H1 (cell line): ENCODE measurements at regions of chr16 and their contacts with region 1.

Region 1: DNA sequence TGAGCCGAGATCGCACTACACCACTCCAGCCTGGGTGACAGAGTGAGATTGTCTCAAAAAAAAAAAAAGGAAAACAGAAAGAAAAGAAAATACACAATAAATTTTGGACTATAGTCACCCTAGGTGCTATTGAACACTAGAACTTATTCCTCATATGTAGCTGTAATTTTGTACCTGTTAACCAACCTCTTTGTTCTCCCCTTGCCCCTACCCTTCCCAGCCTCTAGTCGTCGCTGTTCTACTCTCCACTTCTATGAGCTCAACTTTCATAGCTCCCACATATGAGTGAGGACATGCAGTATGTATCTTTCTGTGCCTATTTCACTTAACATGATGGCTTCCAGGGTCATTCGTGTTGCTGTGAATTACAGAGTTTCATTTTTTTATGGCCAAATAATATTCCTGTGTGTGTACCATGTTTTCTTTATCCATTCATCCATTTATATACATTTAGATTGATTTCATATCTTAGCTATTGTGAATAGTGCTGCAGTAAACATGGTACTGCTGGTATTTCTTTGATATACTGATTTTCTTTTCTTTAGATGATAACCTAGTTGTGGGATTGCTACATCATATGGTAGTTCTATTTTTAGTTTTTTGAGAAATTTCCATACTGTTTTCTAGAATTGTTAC is 28.3 kb downstream of the VPS35L start:
- DNase-seq: no peak
- H3K4me3 ChIP-seq: no peak overlapping the region
- H3K27ac ChIP-seq: no peak overlapping the region
- H3K4me1 ChIP-seq: no peaks in the 10 kb centered on the region
- H3K27me3 ChIP-seq: no peaks in the 10 kb centered on the region
- CTCF ChIP-seq: peak; percentile 27 to 87 (median 53)
- EP300 ChIP-seq: no peak
- POLR2A ChIP-seq: no peak
- RAD21 ChIP-seq: peak; percentile 51 to 64; a peak in 3 of 4 replicates

Region 2: DNA sequence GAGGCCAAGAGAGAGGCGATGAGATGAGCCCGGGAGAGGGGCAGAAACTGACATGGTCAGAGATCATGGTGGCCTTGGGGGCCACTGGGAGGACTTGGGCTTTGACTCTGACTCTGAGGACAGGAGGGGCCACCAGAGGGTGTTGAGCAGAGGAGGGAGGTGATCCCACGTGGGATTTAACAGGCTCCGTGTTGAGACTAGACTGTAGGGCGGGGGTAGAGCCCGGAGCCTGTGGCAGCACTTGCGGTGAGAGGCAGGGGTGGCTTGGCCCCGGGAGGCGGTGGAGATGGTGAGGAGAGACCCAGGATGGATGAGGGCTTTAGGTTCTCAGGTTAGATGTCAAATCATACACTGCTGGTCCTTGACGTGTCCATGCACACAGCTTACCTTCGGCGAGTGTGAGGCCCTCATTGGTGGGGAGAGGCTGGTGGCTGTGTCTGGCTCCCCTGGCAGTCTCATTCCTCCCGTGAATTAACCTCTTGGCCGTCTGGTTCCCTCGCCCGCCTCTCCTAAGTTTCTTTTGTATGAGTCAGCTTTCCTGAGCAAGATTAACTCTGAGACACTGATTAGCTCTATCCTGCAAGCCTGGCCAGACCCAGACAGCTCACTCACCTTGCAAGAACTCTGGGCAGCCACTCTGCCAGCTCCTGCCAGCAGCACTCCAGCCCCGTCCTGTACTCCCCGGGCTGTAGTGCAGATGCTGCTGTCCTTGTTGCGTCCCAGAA is 11.4 kb after region 1 on chr16:
- CTCF ChIA-PET with region 1: interaction called, 91 read pairs
- POLR2A ChIA-PET with region 1: no interaction called
- DNase-seq: no peak
- H3K4me3 ChIP-seq: no peak overlapping the region
- H3K27ac ChIP-seq: 0 out of 2 replicates have a peak overlapping the region, but pooled peaks have one; percentile 15
- H3K4me1 ChIP-seq: peaks cover 0 to 6% (median 1%) of the 10 kb centered on the region in 4 experiments; a peak in 3 of 7 replicates
- H3K27me3 ChIP-seq: no peaks in the 10 kb centered on the region
- CTCF ChIP-seq: no peak
- EP300 ChIP-seq: no peak
- POLR2A ChIP-seq: no peak
- RAD21 ChIP-seq: no peak

Region 3: GRCh38 chr16:19601083-19601976 is 17.5 kb after region 1 on chr16:
- CTCF ChIA-PET with region 1: interaction called, 91 read pairs
- POLR2A ChIA-PET with region 1: no interaction called
- DNase-seq: peak in 1 of 2 experiments; percentile 56
- H3K4me3 ChIP-seq: no peak overlapping the region
- H3K27ac ChIP-seq: no peak overlapping the region
- H3K4me1 ChIP-seq: peaks cover 0 to 4% (median 2%) of the 10 kb centered on the region in 4 experiments; a peak in 3 of 7 replicates
- H3K27me3 ChIP-seq: no peaks in the 10 kb centered on the region
- CTCF ChIP-seq: peak in 2 of 3 experiments; percentile 51; a peak in 3 of 4 replicates
- EP300 ChIP-seq: no peak
- POLR2A ChIP-seq: no peak
- RAD21 ChIP-seq: peak; percentile 79 to 87

Region 4: DNA sequence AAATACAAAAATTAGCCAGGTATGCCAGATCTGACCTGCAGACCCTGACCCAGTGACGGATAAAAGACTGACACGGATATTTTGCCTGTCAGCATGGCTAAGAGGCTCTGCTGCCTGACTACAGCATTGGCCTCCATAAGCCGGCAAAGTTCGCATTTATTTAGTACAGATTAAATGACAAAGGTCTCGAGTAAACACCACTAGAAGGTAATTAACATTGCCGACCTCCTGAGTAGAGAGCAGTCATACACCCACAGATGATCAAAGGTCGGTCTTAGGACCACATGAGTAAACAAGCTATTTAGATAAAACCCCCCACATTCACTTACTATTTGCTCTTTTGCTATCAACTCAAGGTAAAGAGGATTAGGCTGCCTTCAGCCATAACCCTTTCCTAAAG is 78.6 kb after region 1 on chr16:
- CTCF ChIA-PET with region 1: no interaction called
- POLR2A ChIA-PET with region 1: no interaction called
- DNase-seq: peak in 1 of 2 experiments; percentile 43
- H3K4me3 ChIP-seq: no peak overlapping the region
- H3K27ac ChIP-seq: no peak overlapping the region
- H3K4me1 ChIP-seq: no peaks in the 10 kb centered on the region
- H3K27me3 ChIP-seq: no peaks in the 10 kb centered on the region
- CTCF ChIP-seq: no peak
- EP300 ChIP-seq: no peak
- POLR2A ChIP-seq: no peak
- RAD21 ChIP-seq: no peak

Region 5: GRCh38 chr16:19722269-19722952 is 138.6 kb after region 1 on chr16:
- CTCF ChIA-PET with region 1: no interaction called
- POLR2A ChIA-PET with region 1: no interaction called
- DNase-seq: no peak
- H3K4me3 ChIP-seq: no peak overlapping the region
- H3K27ac ChIP-seq: no peak overlapping the region
- H3K4me1 ChIP-seq: peaks cover 0 to 6% (median 4%) of the 10 kb centered on the region in 4 experiments; a peak in 5 of 7 replicates
- H3K27me3 ChIP-seq: no peaks in the 10 kb centered on the region
- CTCF ChIP-seq: no peak
- EP300 ChIP-seq: no peak
- POLR2A ChIP-seq: no peak
- RAD21 ChIP-seq: no peak